ENCODE measurements at regions of chr22 and their contacts with region 1.

Region 1: DNA sequence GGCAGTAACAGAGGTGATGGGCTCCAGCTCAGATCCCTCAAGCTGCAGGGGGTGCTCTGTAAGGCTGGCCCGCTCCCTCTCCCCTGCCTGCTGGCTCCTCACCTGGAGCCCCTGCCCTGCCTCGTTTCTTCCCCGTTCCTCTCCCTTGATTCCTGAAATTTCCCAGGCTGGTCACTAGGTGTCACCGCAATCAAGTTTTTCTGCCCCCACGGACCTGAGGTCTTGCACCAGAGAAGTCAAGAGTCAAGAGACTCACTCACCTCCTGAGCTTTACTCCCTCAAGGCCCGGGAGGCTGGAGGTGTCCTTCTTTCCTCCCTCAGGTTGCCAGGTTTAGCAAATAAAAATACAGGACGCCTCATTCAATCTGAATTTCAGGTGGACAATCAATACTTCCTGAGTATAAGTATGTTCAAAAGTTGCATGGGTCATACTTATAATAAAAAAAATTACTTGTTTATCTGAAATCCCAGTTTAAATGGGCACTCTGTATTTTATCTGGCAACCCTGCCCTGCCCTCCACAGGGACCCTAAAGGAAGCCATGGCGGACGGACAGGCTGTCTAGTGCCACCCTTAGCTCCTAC is 69.2 kb downstream of the SCUBE1 start:
- H3K4me3 ChIP-seq: no peak overlapping the region
- H3K27ac ChIP-seq: no peak overlapping the region
- H3K4me1 ChIP-seq: peaks cover 13% of the 10 kb centered on the region
- CTCF ChIP-seq: peak; percentile 78

Region 2: GRCh38 chr22:43263645-43264514 is 10.1 kb before region 1 on chr22:
- CTCF ChIA-PET with region 1: interaction called, 29 read pairs
- POLR2A ChIA-PET with region 1: interaction called, 3 read pairs
- H3K4me3 ChIP-seq: peak overlapping the region; percentile 12
- H3K27ac ChIP-seq: no peak overlapping the region; the same call in 1 of the 2 replicates
- H3K4me1 ChIP-seq: peaks cover 9% of the 10 kb centered on the region
- CTCF ChIP-seq: no peak

Region 3: DNA sequence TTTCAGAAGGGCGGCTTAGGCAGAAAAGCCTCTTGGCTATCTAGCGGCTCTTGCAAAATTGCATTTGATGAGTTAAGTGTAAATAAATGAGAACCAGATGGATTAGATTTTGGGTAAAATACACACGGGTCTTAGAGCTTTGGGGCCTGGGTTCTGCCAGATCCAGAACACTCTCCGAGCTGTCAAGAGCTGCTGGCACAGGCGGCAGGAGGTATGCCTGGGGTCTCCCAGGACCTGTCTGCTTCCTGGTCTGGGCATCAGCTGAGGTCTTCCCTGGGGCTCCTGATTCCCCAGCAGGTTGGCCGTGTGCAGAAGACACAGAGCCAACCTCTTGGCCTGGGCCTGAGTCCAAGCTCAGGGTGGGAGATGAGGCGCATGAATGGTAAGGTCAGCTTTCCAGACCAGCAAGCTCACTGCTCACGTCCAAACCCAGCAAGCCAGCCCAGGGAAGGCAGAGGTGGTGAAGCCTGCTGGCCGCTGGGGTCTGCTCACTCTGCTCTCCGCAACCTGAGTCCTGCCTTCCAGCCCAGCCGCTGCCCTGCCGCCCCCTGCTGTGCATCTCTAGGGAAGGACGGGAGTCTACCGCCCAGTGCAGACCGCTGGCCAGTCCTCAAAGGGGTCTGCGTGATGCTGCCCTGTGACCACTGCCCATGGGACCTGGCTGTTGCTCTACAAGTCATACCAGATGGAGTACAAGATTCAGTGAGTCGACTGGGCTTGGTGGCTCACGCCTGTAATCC is 24.2 kb after region 1 on chr22:
- CTCF ChIA-PET with region 1: interaction called, 10 read pairs
- POLR2A ChIA-PET with region 1: no interaction called
- H3K4me3 ChIP-seq: no peak overlapping the region
- H3K27ac ChIP-seq: no peak overlapping the region
- H3K4me1 ChIP-seq: no peaks in the 10 kb centered on the region
- CTCF ChIP-seq: 0 out of 2 replicates have a peak, but pooled peaks have one; percentile 11

Region 4: DNA sequence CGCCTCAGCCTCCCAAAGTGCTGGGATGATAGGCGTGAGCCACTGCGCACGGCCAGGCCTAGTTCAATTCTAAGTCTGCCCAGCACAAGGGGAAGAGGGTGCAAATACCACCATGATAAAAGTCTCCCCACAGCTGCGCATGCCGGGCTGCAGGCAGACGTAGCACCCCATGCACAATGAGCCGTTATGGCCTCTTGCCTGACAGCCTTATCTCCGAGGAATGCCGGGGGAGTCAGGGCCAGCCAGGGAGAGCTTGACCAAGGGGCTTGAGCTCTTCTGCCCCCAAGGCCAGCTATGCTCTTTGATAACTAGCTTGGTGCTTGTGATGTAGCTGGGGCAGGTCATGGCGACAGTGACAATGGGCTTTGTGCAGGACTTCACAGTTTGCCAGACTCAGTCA is 82.9 kb after region 1 on chr22:
- CTCF ChIA-PET with region 1: interaction called, 20 read pairs
- POLR2A ChIA-PET with region 1: no interaction called
- H3K4me3 ChIP-seq: no peak overlapping the region
- H3K27ac ChIP-seq: no peak overlapping the region
- H3K4me1 ChIP-seq: no peaks in the 10 kb centered on the region
- CTCF ChIP-seq: no peak

Region 5: GRCh38 chr22:43385770-43386641 is 112.0 kb after region 1 on chr22:
- CTCF ChIA-PET with region 1: interaction called, 131 read pairs
- POLR2A ChIA-PET with region 1: no interaction called
- H3K4me3 ChIP-seq: no peak overlapping the region
- H3K27ac ChIP-seq: no peak overlapping the region
- H3K4me1 ChIP-seq: no peaks in the 10 kb centered on the region
- CTCF ChIP-seq: peak; percentile 89

Region 6: DNA sequence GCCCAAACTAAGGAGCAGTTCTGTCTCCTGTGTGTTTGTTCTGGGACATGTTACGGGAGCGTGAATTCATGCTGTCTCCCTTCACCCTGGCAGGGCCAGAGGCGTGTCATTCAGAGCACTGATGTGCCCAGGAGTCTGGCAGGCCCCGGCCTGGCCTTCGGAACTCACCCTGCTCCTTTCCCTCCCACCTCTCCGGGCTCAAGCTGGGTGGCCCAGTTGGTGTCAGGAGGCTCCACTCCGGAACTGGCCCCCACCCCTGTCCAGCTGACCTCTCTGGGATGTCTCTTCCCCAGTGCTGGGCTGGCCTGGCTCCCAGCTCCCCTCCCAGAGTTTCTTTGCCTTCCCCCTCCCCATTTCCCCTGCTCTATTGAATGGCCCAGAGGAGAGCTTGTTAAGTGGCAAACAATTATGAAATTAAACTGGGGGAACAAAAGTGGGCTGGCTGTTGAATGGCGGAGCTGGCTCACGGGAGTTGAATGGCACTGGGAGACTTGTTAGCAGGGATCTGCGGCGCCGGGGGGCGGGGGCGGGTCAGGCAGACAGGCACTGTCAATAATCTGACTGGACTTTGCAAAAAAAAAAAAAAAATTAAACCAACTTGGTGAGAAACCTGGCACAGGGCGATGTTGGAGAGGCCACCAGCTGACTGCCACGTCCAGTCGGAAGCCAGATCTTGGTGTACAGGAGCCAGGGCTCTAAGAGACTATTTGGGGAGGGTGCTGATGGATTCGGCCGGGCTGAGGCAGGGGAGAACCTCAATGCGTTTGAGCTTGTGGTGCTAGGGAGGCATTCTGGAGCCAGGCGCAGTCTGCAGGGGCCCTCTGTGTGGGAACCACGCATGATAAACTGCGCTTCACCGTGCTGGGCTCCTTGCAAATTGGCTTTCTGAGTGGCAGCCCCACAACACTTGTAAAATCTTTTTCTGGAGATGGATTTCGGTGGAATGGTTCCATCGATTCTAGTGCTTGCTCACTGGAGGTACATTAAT is 139.1 kb after region 1 on chr22:
- CTCF ChIA-PET with region 1: no interaction called
- POLR2A ChIA-PET with region 1: no interaction called
- H3K4me3 ChIP-seq: no peak overlapping the region
- H3K27ac ChIP-seq: no peak overlapping the region
- H3K4me1 ChIP-seq: no peaks in the 10 kb centered on the region
- CTCF ChIP-seq: no peak

Region 7: DNA sequence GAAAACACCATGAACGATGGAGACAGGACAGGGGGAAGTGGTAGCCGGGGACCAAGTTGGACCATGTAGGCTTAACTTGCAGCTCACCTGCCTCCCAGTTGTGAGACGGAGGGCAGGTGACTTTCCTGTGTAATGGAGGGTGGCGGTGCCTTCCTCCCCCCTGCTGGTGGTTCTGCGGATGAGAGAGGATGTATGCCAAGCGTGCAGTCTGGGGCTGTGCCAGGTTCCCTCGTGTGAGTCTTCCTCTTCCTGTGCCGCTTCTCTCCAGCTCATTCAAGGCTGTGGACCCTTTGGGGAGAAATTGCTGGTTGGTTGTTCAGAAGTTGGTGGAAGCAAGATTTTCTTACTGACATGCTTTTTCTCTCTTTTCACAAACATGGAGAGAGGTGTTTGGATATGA is 172.9 kb after region 1 on chr22:
- CTCF ChIA-PET with region 1: no interaction called
- POLR2A ChIA-PET with region 1: no interaction called
- H3K4me3 ChIP-seq: no peak overlapping the region
- H3K27ac ChIP-seq: no peak overlapping the region
- H3K4me1 ChIP-seq: no peaks in the 10 kb centered on the region
- CTCF ChIP-seq: no peak